Endothelial cell of umbilical vein (primary cell): ENCODE measurements at regions of chr6 and their contacts with region 1.

Region 1: GRCh38 chr6:13908955-13909381 is 15.8 kb upstream of the RNF182 start:
- DNase-seq: peak; percentile 67
- H3K4me3 ChIP-seq: no peak overlapping the region
- H3K27ac ChIP-seq: no peak overlapping the region
- H3K4me1 ChIP-seq: peaks cover 6% of the 10 kb centered on the region
- H3K27me3 ChIP-seq: peaks cover 3% of the 10 kb centered on the region in 2 experiments
- CTCF ChIP-seq: peak; percentile 54 to 62
- POLR2A ChIP-seq: no peak

Region 2: GRCh38 chr6:13026557-13026956 is 882.4 kb before region 1 on chr6:
- CTCF ChIA-PET with region 1: no interaction called
- POLR2A ChIA-PET with region 1: no interaction called
- dilution Hi-C with region 1: no loop called
- intact Hi-C with region 1: no loop called
- DNase-seq: no peak
- H3K4me3 ChIP-seq: no peak overlapping the region
- H3K27ac ChIP-seq: no peak overlapping the region
- H3K4me1 ChIP-seq: no peaks in the 10 kb centered on the region
- H3K27me3 ChIP-seq: no peaks in the 10 kb centered on the region
- CTCF ChIP-seq: no peak
- POLR2A ChIP-seq: no peak

Region 3: GRCh38 chr6:13892007-13892645 is 16.8 kb before region 1 on chr6:
- CTCF ChIA-PET with region 1: interaction called, 11 read pairs
- POLR2A ChIA-PET with region 1: no interaction called
- dilution Hi-C with region 1: no loop called
- intact Hi-C with region 1: no loop called
- DNase-seq: no peak
- H3K4me3 ChIP-seq: no peak overlapping the region
- H3K27ac ChIP-seq: no peak overlapping the region
- H3K4me1 ChIP-seq: no peaks in the 10 kb centered on the region
- H3K27me3 ChIP-seq: peaks cover 0 to 2% of the 10 kb centered on the region in 2 experiments
- CTCF ChIP-seq: no peak
- POLR2A ChIP-seq: no peak

Region 4: GRCh38 chr6:14009431-14009830 is 100.5 kb after region 1 on chr6:
- CTCF ChIA-PET with region 1: no interaction called
- POLR2A ChIA-PET with region 1: no interaction called
- dilution Hi-C with region 1: no loop called
- intact Hi-C with region 1: no loop called
- DNase-seq: no peak
- H3K4me3 ChIP-seq: no peak overlapping the region
- H3K27ac ChIP-seq: no peak overlapping the region
- H3K4me1 ChIP-seq: no peaks in the 10 kb centered on the region
- H3K27me3 ChIP-seq: no peaks in the 10 kb centered on the region
- CTCF ChIP-seq: no peak
- POLR2A ChIP-seq: no peak

Region 5: DNA sequence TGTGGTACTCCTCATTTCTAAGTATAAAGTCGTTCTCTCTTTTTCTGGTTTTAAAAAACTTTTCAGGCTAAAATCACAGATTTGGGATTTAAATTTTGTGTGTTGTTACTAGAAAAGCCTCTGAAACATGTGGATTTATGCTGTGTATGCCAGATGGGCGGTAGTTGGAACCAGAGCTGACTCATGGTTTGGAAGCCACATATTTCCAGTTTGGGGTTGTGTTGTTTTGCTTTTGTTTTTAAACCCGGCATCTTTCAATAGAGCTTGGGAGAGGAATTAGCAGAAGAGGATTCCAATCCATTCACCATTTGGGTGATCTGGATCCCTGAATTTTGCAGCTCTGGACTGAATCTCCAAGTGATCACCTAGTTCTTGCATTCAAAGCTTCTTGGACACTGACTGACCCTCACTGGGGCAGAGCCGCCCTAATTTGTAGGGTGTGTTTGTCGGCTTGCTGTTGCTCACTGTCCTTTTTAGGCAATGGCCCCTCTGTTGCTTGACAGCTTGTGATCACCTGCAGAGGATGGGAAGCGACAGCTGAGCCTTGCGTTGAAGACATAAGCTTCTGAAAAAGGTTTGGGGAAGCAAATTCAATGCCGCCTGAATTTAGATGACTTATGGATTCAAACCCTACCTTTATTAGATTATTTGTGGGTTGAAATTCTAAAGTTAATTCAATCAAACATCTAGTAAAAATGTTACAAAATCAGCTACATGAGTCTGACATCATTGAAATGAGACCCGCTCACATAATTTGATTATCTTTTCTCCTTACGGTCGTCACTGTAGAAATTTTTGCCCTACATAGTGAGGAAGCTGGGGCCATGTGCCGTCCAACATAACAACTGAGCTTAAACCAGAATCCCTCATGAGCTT is 128.7 kb after region 1 on chr6:
- CTCF ChIA-PET with region 1: interaction called, 27 read pairs
- POLR2A ChIA-PET with region 1: no interaction called
- dilution Hi-C with region 1: no loop called
- intact Hi-C with region 1: no loop called
- DNase-seq: no peak
- H3K4me3 ChIP-seq: no peak overlapping the region
- H3K27ac ChIP-seq: no peak overlapping the region
- H3K4me1 ChIP-seq: no peaks in the 10 kb centered on the region
- H3K27me3 ChIP-seq: peaks cover 0 to 4% of the 10 kb centered on the region in 2 experiments
- CTCF ChIP-seq: no peak
- POLR2A ChIP-seq: no peak

Region 6: DNA sequence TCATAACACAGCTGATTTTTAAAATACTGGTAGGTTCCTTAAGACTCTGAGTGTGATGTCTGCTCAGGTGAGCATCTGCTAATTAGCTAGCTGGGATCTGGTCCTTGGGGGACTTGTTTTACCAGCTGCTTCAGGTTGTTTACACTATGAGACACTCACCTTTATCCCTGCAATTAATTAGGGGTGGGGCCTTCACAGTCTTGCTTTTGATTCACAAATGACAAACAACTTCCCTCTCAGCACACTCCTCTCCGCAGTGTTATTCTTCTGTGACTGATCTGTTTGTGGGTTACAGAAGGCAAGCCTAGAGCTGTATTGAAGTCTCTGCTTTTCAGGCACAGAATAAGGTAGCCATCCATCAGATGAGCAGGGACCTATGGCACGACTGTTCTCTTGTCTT is 146.6 kb after region 1 on chr6:
- CTCF ChIA-PET with region 1: interaction called, 20 read pairs
- POLR2A ChIA-PET with region 1: no interaction called
- dilution Hi-C with region 1: no loop called
- intact Hi-C with region 1: no loop called
- DNase-seq: no peak
- H3K4me3 ChIP-seq: no peak overlapping the region
- H3K27ac ChIP-seq: no peak overlapping the region
- H3K4me1 ChIP-seq: no peaks in the 10 kb centered on the region
- H3K27me3 ChIP-seq: peaks cover 2 to 12% of the 10 kb centered on the region in 2 experiments
- CTCF ChIP-seq: no peak
- POLR2A ChIP-seq: no peak

Region 7: DNA sequence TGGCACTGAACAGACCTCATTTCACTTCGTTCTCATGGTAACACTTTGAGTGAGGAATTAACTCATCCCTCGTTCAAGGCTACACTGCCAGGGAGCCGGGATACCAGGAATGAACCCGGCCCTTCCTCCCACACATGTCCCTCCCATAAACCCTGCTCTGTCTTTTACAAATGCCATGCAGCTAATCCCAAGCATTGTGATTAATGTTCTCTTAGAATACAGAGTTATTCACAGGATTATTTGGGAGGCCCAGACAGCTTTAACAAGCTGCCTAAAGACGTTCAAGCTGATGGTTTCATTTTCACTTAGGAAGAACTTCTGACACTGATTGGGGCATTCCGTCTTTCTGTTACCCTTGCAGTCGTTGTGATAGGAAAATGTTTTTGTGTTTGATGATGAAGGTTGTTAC is 166.1 kb after region 1 on chr6:
- CTCF ChIA-PET with region 1: interaction called, 10 read pairs
- POLR2A ChIA-PET with region 1: no interaction called
- dilution Hi-C with region 1: no loop called
- intact Hi-C with region 1: no loop called
- DNase-seq: peak; percentile 59
- H3K4me3 ChIP-seq: peak overlapping the region; percentile 25 to 69 (median 61)
- H3K27ac ChIP-seq: no peak overlapping the region
- H3K4me1 ChIP-seq: peaks cover 2% of the 10 kb centered on the region
- H3K27me3 ChIP-seq: no peaks in the 10 kb centered on the region
- CTCF ChIP-seq: no peak
- POLR2A ChIP-seq: no peak

Region 8: GRCh38 chr6:15389765-15390723 is 1481.1 kb after region 1 on chr6:
- CTCF ChIA-PET with region 1: no interaction called
- POLR2A ChIA-PET with region 1: no interaction called
- dilution Hi-C with region 1: no loop called
- intact Hi-C with region 1: loop called (anchors 1 kb)
- DNase-seq: peak; percentile 73
- H3K4me3 ChIP-seq: no peak overlapping the region
- H3K27ac ChIP-seq: no peak overlapping the region
- H3K4me1 ChIP-seq: no peaks in the 10 kb centered on the region
- H3K27me3 ChIP-seq: no peaks in the 10 kb centered on the region
- CTCF ChIP-seq: peak; percentile 60 to 71
- POLR2A ChIP-seq: no peak